Activated CD4-positive, alpha-beta T cell treated with anti-CD3 and anti-CD28 coated beads, Interleukin-2, amount 10 ng/mL, durations not matched to agents 7 days and 5 days (primary cell): ENCODE measurements at regions of chr6 and their contacts with region 1.

Region 1: DNA sequence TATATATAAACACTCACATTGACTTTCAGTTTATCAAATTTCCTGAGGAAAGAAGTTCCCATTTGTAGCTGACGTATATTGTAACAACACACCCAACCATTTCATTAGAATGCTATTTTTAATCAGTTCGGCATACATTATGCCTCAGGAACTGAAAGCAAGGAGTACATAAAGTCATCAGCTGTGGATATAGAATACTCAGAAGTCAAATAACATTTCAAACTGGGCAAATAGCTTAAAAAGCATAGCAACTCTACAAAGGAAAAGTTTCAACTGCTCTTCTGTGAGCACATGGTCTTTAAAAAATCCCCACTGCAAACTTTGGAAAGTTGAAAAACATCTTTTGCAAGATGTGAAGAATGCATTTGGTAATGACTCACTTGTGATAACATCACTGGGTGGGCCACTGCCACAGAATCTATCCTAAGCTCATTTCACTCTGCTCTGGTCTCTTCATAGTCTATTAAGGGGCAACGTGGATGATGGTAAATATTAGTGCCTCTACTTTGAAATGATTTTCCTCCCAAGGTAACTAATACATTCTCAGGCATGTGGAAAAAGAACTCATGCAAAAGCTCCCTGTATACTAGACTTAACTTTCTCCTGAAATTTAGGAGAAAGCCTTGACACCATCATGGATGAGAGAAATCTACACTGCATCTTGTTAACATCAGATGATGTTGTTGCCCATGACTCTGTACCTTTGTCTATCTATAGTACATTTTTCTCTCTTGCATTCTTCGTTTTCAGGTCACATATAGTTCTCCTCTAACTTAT is 49.2 kb downstream of the FYN start:
- DNase-seq: no peak
- H3K4me3 Mint-ChIP-seq: peak overlapping the region; percentile 42
- H3K27ac Mint-ChIP-seq: peak overlapping the region; percentile 80
- H3K4me1 Mint-ChIP-seq: peaks cover 61% of the 10 kb centered on the region
- H3K27me3 Mint-ChIP-seq: no peaks in the 10 kb centered on the region

Region 2: GRCh38 chr6:111813237-111813636 is 10.8 kb before region 1 on chr6:
- CTCF ChIA-PET with region 1: interaction called, 22 read pairs
- POLR2A ChIA-PET with region 1: interaction called, 3 read pairs
- DNase-seq: no peak
- H3K4me3 Mint-ChIP-seq: no peak overlapping the region
- H3K27ac Mint-ChIP-seq: peak overlapping the region; percentile 66
- H3K4me1 Mint-ChIP-seq: peaks cover 75% of the 10 kb centered on the region
- H3K27me3 Mint-ChIP-seq: no peaks in the 10 kb centered on the region

Region 3: GRCh38 chr6:111838749-111839484 is 14.9 kb after region 1 on chr6:
- CTCF ChIA-PET with region 1: interaction called, 13 read pairs
- POLR2A ChIA-PET with region 1: no interaction called
- DNase-seq: peak; percentile 41
- H3K4me3 Mint-ChIP-seq: peak overlapping the region; percentile 30
- H3K27ac Mint-ChIP-seq: peak overlapping the region; percentile 89
- H3K4me1 Mint-ChIP-seq: peaks cover 24% of the 10 kb centered on the region
- H3K27me3 Mint-ChIP-seq: no peaks in the 10 kb centered on the region

Region 4: DNA sequence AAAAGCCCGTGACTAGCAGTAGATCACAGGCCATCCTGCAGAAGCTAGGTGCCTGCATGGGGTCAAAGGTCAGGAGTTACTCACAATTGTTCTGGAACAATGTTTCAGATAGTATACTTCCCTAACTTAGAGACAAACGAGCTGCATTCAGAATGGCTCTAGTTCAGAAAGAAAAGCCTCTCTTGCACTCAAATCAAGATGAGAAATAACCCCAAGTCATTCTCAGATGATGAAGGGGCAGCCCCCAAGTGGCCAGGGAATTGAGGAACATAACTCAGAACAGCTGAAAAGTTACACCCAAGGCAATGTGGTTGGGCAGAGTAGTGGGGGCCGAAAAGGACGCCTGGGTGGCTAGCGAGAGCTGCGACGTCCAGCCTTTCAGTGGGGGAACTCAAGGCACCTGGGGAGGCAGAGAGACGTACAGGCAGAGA is 21.4 kb after region 1 on chr6:
- CTCF ChIA-PET with region 1: interaction called, 13 read pairs
- POLR2A ChIA-PET with region 1: no interaction called
- DNase-seq: no peak
- H3K4me3 Mint-ChIP-seq: no peak overlapping the region
- H3K27ac Mint-ChIP-seq: no peak overlapping the region
- H3K4me1 Mint-ChIP-seq: peaks cover 15% of the 10 kb centered on the region
- H3K27me3 Mint-ChIP-seq: no peaks in the 10 kb centered on the region